ENCODE measurements at regions of chr15 and their contacts with region 1.

Region 1: DNA sequence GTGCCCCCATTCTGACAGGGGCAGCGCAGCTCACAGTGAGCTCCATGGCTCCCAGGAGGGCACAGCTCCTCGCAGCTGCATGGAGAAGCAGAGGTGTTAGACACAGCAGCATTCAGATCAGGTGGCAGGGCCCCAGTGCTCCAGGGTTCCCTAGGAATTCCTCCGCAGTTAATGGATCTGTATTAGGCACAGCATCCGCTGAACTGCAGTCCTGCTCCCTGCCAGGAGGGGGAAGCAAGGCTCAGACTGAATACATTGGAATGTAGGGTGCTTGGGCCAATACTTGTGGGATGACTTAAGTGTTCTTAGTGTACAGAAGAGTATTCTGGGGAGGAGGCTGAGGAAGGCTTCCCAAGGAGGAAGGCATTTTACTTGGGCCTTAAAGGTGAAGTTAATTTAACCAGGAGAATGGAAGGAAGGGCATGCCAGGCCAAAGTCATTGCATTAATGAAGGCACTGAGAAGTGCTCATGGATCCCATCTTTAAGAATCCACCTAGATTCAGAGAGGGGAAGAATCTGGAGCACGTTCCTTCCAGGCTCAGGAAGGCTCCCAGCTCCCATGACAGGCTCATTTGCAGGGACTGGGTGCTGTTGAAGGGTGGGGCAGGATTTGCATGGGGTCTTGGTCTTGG is 111.6 kb downstream of the RAB11A start:
- DNase-seq: peak; percentile 77
- H3K4me3 ChIP-seq: no peak overlapping the region
- H3K27ac ChIP-seq: no peak overlapping the region
- H3K4me1 ChIP-seq: no peaks in the 10 kb centered on the region
- H3K27me3 ChIP-seq: peaks cover 35% of the 10 kb centered on the region
- CTCF ChIP-seq: peak; percentile 83

Region 2: GRCh38 chr15:65927545-65927944 is 53.4 kb before region 1 on chr15:
- CTCF ChIA-PET with region 1: no interaction called
- POLR2A ChIA-PET with region 1: no interaction called
- intact Hi-C with region 1: no loop called
- DNase-seq: no peak
- H3K4me3 ChIP-seq: no peak overlapping the region
- H3K27ac ChIP-seq: no peak overlapping the region
- H3K4me1 ChIP-seq: no peaks in the 10 kb centered on the region
- H3K27me3 ChIP-seq: no peaks in the 10 kb centered on the region
- CTCF ChIP-seq: no peak

Region 3: GRCh38 chr15:66085128-66085527 is 104.2 kb after region 1 on chr15:
- CTCF ChIA-PET with region 1: no interaction called
- POLR2A ChIA-PET with region 1: interaction called, 3 read pairs
- intact Hi-C with region 1: loop called (anchors 5 kb)
- DNase-seq: peak; percentile 52
- H3K4me3 ChIP-seq: no peak overlapping the region
- H3K27ac ChIP-seq: no peak overlapping the region
- H3K4me1 ChIP-seq: peaks cover 5% of the 10 kb centered on the region
- H3K27me3 ChIP-seq: peaks cover 3% of the 10 kb centered on the region
- CTCF ChIP-seq: peak; percentile 29; the same call in 1 of the 2 replicates

Measured in A673 (cell line).